Sciatic nerve (tissue), 2 donors: ENCODE measurements at regions of chr14 and their contacts with region 1.

Region 1: GRCh38 chr14:77044783-77045237 is 16.3 kb upstream of the IRF2BPL start:
- DNase-seq: peak; percentile 78
- ATAC-seq: peak; percentile 74

Region 2: DNA sequence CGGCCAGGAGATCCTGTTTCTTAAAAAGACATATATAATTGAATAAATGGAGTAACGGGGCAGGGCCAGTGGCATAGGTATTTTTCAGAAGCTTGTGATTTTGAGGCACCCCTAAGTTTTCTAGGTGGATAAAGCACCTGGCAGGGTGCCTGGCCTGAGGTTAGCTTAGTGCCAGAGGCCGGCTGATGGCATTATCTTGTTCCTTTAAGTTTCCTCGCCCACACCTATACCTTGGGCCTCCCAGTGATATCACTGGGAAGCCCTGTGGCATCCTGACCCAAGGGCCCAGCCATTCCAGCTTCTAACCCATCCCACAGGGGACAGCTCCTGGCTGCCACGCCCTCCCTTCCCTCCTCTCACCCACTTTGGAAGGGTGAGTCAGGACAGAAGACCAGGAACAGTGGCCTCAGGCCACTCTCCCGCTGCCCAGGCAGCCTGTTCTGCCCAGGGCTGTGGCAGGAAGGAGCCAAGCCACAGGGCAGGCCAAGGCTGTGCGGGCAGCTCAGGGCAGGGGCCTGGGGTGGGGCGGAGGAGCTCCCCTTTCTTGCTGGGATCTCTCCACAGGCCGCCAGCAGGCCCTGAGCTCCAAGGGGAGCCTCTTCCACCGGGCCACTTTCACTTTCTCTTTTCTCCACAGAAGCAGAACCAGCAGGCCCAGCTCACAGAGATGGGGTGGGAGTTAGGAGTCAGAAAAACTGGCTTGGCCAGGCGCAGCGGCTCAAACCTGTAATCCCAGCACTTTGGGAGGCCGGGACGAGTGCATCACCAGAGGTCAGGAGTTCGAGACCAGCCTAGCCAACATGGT is 91.4 kb before region 1 on chr14:
- intact Hi-C with region 1: loop called (anchors 1 kb)
- DNase-seq: peak; percentile 75
- ATAC-seq: peak; percentile 76